CD4-positive, alpha-beta memory T cell (primary cell): ENCODE measurements at regions of chr3 and their contacts with region 1.

Region 1: DNA sequence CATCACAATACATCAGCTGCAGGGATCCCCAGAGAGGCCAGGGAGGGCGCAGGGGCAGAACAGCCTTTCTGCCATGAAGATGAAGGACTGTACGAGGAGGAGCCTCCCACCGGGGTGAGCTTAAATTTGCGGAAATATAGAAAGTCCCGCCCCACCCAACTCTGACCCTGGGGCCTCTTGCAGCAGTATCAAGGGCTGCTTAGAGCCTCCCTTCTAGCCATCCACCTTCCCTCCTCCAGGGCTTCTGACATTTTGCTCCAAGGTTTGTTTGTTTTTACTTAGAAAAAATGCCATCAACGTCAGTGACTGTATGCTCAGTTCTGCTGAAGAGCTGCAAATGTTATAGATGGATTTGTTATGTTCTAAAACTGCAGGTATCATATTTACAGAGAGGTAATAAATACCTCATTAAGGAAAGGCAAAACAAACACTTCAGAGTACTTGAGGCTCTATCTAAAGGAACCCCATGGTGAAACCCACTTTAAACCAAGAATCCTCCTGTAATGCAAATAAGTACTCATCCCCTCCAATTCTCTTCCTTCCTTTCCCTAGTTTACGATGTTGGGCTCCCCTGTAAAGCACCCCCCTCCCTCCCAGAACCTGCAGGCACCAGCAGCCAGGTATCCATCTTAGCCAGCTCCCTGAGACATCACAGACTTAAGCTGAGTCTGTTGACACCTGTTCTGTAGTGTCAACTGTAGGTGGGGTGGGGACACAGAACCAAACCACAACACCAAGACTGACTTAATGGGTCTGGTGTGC is 30.5 kb downstream of the RFTN1 start:
- DNase-seq: peak in 4 of 5 donors; percentile 22 to 58 (median 30)
- H3K4me3 ChIP-seq: peak overlapping the region in 1 of 2 donors; percentile 10
- H3K4me3 Mint-ChIP-seq: peak overlapping the region; percentile 7 to 81 (median 69)
- H3K27ac ChIP-seq: peak overlapping the region; percentile 48
- H3K27ac Mint-ChIP-seq: peak overlapping the region; percentile 85 to 95 (median 89)
- H3K4me1 ChIP-seq: peaks cover 52% of the 10 kb centered on the region
- H3K4me1 Mint-ChIP-seq: peaks cover 50 to 83% (median 64%) of the 10 kb centered on the region in 4 donors
- H3K27me3 ChIP-seq: no peaks in the 10 kb centered on the region
- H3K27me3 Mint-ChIP-seq: no peaks in the 10 kb centered on the region

Region 2: DNA sequence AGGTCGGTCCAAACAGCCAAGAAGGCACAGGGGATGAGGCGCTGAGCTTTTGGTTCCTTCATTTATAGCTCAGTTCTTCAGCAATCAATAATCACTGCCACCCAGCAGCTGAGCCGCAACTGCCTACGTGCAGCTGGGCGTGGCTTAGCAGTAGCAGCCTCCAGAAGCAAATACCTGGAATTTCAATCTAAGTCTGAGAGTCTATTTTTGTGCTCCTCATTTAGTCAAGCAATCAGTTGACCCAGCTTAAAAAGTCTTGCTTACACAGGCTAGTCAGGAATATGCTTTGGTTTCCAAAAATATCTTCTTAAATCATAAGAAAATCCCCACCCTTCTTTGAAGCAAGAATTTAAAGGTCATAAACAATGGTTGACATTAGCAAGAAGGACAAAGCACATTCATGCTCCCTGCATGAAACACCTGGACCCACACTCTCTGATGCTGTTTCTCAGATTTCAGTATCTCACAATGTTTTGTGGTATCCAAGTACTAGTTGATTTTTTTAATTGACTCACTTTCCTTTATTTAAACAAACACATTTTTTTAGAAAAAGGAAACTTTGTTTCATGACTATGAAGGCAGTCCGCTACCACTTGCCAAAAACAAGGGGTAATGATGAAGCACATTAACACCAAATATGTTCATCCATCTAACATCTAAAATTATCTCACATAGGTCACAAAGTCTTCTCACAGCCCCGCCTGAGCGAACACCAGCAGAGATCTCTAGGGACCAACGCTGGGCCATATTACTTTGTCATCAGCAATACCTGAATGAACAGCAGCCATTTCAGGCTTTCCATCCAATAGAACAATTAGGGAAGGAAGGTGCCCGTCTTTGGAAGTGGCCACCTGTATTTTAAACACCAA is 111.8 kb before region 1 on chr3:
- CTCF ChIA-PET with region 1: no interaction called
- POLR2A ChIA-PET with region 1: no interaction called
- intact Hi-C with region 1: no loop called
- DNase-seq: no peak
- H3K4me3 ChIP-seq: no peak overlapping the region
- H3K4me3 Mint-ChIP-seq: no peak overlapping the region
- H3K27ac ChIP-seq: no peak overlapping the region
- H3K27ac Mint-ChIP-seq: peak overlapping the region in 6 of 7 donors; percentile 8 to 75 (median 42)
- H3K4me1 ChIP-seq: peaks cover 22% of the 10 kb centered on the region
- H3K4me1 Mint-ChIP-seq: peaks cover 21 to 59% (median 35%) of the 10 kb centered on the region in 4 donors
- H3K27me3 ChIP-seq: no peaks in the 10 kb centered on the region
- H3K27me3 Mint-ChIP-seq: no peaks in the 10 kb centered on the region

Region 3: DNA sequence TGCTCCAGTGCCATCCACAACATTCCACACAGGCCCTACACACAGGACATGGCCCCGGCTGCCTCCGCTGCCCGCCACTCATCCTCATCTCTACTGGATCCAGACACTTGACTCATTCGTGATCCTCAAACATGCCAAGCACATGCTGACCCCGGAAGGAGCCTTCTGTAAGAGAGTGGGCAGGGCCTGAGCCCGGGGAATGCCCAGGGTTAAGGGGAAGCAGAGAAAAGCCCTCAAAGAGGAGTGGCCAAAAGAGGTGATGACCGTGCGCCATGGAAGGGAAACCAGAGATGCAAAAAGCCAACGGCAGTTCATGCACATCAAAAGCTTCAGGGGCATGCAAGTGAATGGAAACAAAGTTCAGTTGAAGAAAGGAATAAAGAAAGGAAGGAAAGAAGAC is 15.6 kb before region 1 on chr3:
- CTCF ChIA-PET with region 1: no interaction called
- POLR2A ChIA-PET with region 1: interaction called, 16 read pairs
- intact Hi-C with region 1: loop called (anchors 2 kb)
- DNase-seq: peak in 4 of 5 donors; percentile 16 to 76 (median 34)
- H3K4me3 ChIP-seq: no peak overlapping the region
- H3K4me3 Mint-ChIP-seq: peak overlapping the region in 7 of 8 donors; percentile 26 to 84 (median 71)
- H3K27ac ChIP-seq: no peak overlapping the region
- H3K27ac Mint-ChIP-seq: peak overlapping the region; percentile 73 to 98 (median 94)
- H3K4me1 ChIP-seq: peaks cover 43% of the 10 kb centered on the region
- H3K4me1 Mint-ChIP-seq: peaks cover 43 to 66% (median 57%) of the 10 kb centered on the region in 4 donors
- H3K27me3 ChIP-seq: no peaks in the 10 kb centered on the region
- H3K27me3 Mint-ChIP-seq: no peaks in the 10 kb centered on the region

Region 4: DNA sequence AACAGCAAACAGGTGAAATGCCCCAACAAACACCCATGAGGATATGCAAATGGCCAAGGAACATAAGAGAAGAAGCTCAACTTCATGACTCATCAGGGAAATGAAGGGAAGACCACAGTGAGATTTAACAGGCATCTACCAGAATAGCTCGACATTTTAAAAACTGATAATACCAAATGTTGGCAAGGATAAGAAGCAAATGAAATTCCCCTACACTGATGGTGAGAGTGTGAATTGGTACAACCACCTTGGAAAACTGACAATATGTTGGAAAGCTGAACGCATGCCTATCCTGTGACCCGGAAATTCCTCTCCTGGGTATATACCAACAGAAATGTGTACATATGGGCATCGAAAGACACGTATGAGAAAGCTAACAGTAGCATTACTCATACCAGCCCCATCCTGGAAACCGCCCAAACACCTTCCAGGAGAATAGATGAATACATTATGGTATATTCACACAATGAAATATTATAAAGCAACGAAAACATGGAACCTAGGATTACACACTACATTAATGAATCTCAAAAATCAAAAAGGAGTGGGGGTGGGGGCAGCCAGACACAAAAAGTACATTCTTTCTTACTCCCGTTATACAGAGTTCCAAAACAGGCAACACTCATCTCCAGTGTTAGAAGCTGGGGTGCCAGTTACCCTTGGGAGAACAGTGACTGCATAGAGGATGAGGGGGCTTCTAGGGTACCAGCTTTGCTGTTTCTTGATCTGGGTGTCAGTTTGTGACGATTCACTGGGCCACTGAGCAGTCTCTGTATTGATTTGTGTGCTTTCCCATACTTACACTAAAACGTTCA is 13.7 kb after region 1 on chr3:
- CTCF ChIA-PET with region 1: interaction called, 12 read pairs
- POLR2A ChIA-PET with region 1: interaction called, 31 read pairs
- intact Hi-C with region 1: no loop called
- DNase-seq: no peak
- H3K4me3 ChIP-seq: no peak overlapping the region
- H3K4me3 Mint-ChIP-seq: peak overlapping the region in 7 of 8 donors; percentile 5 to 80 (median 37)
- H3K27ac ChIP-seq: no peak overlapping the region
- H3K27ac Mint-ChIP-seq: peak overlapping the region; percentile 39 to 88 (median 62)
- H3K4me1 ChIP-seq: peaks cover 49% of the 10 kb centered on the region
- H3K4me1 Mint-ChIP-seq: peaks cover 51 to 70% (median 54%) of the 10 kb centered on the region in 4 donors
- H3K27me3 ChIP-seq: no peaks in the 10 kb centered on the region
- H3K27me3 Mint-ChIP-seq: no peaks in the 10 kb centered on the region

Region 5: GRCh38 chr3:16816048-16816780 is 333.3 kb after region 1 on chr3:
- CTCF ChIA-PET with region 1: no interaction called
- POLR2A ChIA-PET with region 1: no interaction called
- intact Hi-C with region 1: no loop called
- DNase-seq: no peak
- H3K4me3 ChIP-seq: no peak overlapping the region
- H3K4me3 Mint-ChIP-seq: no peak overlapping the region
- H3K27ac ChIP-seq: no peak overlapping the region
- H3K27ac Mint-ChIP-seq: no peak overlapping the region
- H3K4me1 ChIP-seq: peaks cover 7% of the 10 kb centered on the region
- H3K4me1 Mint-ChIP-seq: peaks cover 9 to 15% (median 14%) of the 10 kb centered on the region in 4 donors
- H3K27me3 ChIP-seq: no peaks in the 10 kb centered on the region
- H3K27me3 Mint-ChIP-seq: no peaks in the 10 kb centered on the region